ENCODE measurements at regions of chr6 and their contacts with region 1.

Region 1: GRCh38 chr6:118679327-118679901 is 28.0 kb upstream of the CEP85L start:
- DNase-seq: peak; percentile 21
- ATAC-seq: peak; percentile 31
- H3K4me3 Mint-ChIP-seq: no peak overlapping the region
- H3K27ac Mint-ChIP-seq: peak overlapping the region; percentile 88
- H3K4me1 Mint-ChIP-seq: peaks cover 64% of the 10 kb centered on the region
- H3K27me3 Mint-ChIP-seq: no peaks in the 10 kb centered on the region
- CTCF ChIP-seq: no peak

Region 2: GRCh38 chr6:118630067-118630466 is 49.3 kb before region 1 on chr6:
- CTCF ChIA-PET with region 1: no interaction called
- POLR2A ChIA-PET with region 1: no interaction called
- intact Hi-C with region 1: no loop called
- DNase-seq: no peak
- ATAC-seq: no peak
- H3K4me3 Mint-ChIP-seq: no peak overlapping the region
- H3K27ac Mint-ChIP-seq: no peak overlapping the region
- H3K4me1 Mint-ChIP-seq: peaks cover 65% of the 10 kb centered on the region
- H3K27me3 Mint-ChIP-seq: no peaks in the 10 kb centered on the region
- CTCF ChIP-seq: no peak

Region 3: DNA sequence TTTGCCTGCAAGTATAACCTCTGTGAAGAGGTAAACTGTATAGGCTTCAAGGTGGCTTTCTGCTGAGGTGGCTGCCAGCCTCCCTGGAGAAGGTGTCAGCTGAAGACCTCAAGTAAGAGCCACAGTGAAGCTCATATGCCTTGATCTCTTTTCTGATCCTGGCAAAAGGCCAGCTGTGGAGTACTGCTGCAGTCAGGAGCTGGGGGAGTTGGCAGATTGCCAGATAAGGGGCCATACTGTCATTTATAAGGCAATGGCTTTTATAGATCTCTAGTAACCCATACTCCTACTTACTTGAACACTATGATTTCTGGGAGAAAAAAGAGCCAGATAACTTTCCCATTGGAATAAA is 19.2 kb before region 1 on chr6:
- CTCF ChIA-PET with region 1: interaction called, 9 read pairs
- POLR2A ChIA-PET with region 1: interaction called, 7 read pairs
- intact Hi-C with region 1: loop called (anchors 2 kb)
- DNase-seq: peak; percentile 81
- ATAC-seq: peak; percentile 52
- H3K4me3 Mint-ChIP-seq: peak overlapping the region; percentile 45
- H3K27ac Mint-ChIP-seq: peak overlapping the region; percentile 87
- H3K4me1 Mint-ChIP-seq: peaks cover 74% of the 10 kb centered on the region
- H3K27me3 Mint-ChIP-seq: no peaks in the 10 kb centered on the region
- CTCF ChIP-seq: no peak

Region 4: GRCh38 chr6:118697554-118697953 is 18.1 kb after region 1 on chr6:
- CTCF ChIA-PET with region 1: interaction called, 12 read pairs
- POLR2A ChIA-PET with region 1: interaction called, 4 read pairs
- intact Hi-C with region 1: no loop called
- DNase-seq: no peak
- ATAC-seq: no peak
- H3K4me3 Mint-ChIP-seq: no peak overlapping the region
- H3K27ac Mint-ChIP-seq: no peak overlapping the region
- H3K4me1 Mint-ChIP-seq: peaks cover 81% of the 10 kb centered on the region
- H3K27me3 Mint-ChIP-seq: no peaks in the 10 kb centered on the region
- CTCF ChIP-seq: no peak

Region 5: GRCh38 chr6:119653329-119653728 is 973.9 kb after region 1 on chr6:
- CTCF ChIA-PET with region 1: no interaction called
- POLR2A ChIA-PET with region 1: no interaction called
- intact Hi-C with region 1: no loop called
- DNase-seq: no peak
- ATAC-seq: no peak
- H3K4me3 Mint-ChIP-seq: no peak overlapping the region
- H3K27ac Mint-ChIP-seq: no peak overlapping the region
- H3K4me1 Mint-ChIP-seq: peaks cover 5% of the 10 kb centered on the region
- H3K27me3 Mint-ChIP-seq: no peaks in the 10 kb centered on the region
- CTCF ChIP-seq: no peak